Activated B cell treated with CpG ODN at 0.5 μM for 24 hours (primary cell): ENCODE measurements at regions of chr16 and their contacts with region 1.

Region 1: DNA sequence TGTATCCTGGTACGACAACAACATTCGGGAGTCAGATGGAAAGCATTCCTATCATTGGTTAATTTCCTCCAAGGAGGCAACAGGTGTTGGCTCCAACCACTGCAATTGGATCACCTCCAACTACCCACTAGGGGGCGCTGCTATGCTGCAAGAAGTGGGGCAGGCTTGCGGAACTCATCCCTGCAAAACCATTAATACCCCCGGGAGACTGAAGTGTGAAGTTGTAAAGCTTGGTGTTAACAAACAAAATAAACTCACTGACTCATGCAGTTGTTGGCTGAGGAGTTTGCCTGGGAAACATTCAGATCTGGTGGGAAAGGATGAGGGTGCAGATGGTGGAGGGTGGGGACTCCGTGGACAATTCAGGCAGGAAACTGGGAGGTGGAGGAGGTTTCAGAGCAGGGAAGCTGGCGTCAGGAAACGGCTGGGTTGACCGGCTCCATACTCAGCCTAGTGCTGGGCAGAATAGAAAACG is 84.9 kb downstream of the HS3ST2 start:
- DNase-seq: no peak
- ATAC-seq: no peak
- H3K4me3 Mint-ChIP-seq: no peak overlapping the region
- H3K27ac Mint-ChIP-seq: no peak overlapping the region
- H3K4me1 Mint-ChIP-seq: no peaks in the 10 kb centered on the region
- H3K27me3 Mint-ChIP-seq: peaks cover 24% of the 10 kb centered on the region
- CTCF ChIP-seq: no peak

Region 2: GRCh38 chr16:21101631-21102420 is 1797.1 kb before region 1 on chr16:
- CTCF ChIA-PET with region 1: no interaction called
- POLR2A ChIA-PET with region 1: no interaction called
- intact Hi-C with region 1: no loop called
- DNase-seq: no peak
- ATAC-seq: no peak
- H3K4me3 Mint-ChIP-seq: no peak overlapping the region
- H3K27ac Mint-ChIP-seq: no peak overlapping the region
- H3K4me1 Mint-ChIP-seq: no peaks in the 10 kb centered on the region
- H3K27me3 Mint-ChIP-seq: peaks cover 22% of the 10 kb centered on the region
- CTCF ChIP-seq: no peak

Region 3: GRCh38 chr16:23060458-23061320 is 161.8 kb after region 1 on chr16:
- CTCF ChIA-PET with region 1: no interaction called
- POLR2A ChIA-PET with region 1: no interaction called
- intact Hi-C with region 1: loop called (anchors 2 kb)
- DNase-seq: peak; percentile 31
- ATAC-seq: peak; percentile 91
- H3K4me3 Mint-ChIP-seq: peak overlapping the region; percentile 22
- H3K27ac Mint-ChIP-seq: no peak overlapping the region
- H3K4me1 Mint-ChIP-seq: peaks cover 5% of the 10 kb centered on the region
- H3K27me3 Mint-ChIP-seq: peaks cover 13% of the 10 kb centered on the region
- CTCF ChIP-seq: peak; percentile 41